B cell (primary cell): ENCODE measurements at regions of chr7 and their contacts with region 1.

Region 1: GRCh38 chr7:90629297-90629918 is 33.3 kb downstream of the CDK14 start:
- DNase-seq: peak; percentile 75
- ATAC-seq: peak; percentile 86
- H3K4me3 ChIP-seq: no peak overlapping the region
- H3K4me3 Mint-ChIP-seq: no peak overlapping the region
- H3K27ac ChIP-seq: no peak overlapping the region
- H3K27ac Mint-ChIP-seq: no peak overlapping the region
- H3K4me1 ChIP-seq: no peaks in the 10 kb centered on the region
- H3K4me1 Mint-ChIP-seq: peaks cover 13% of the 10 kb centered on the region
- H3K27me3 ChIP-seq: no peaks in the 10 kb centered on the region
- H3K27me3 Mint-ChIP-seq: no peaks in the 10 kb centered on the region
- CTCF ChIP-seq: peak; percentile 75

Region 2: GRCh38 chr7:90552521-90552920 is 76.9 kb before region 1 on chr7:
- CTCF ChIA-PET with region 1: interaction called, 122 read pairs
- POLR2A ChIA-PET with region 1: no interaction called
- intact Hi-C with region 1: loop called (anchors 1 kb)
- DNase-seq: peak; percentile 44
- ATAC-seq: no peak
- H3K4me3 ChIP-seq: no peak overlapping the region
- H3K4me3 Mint-ChIP-seq: no peak overlapping the region
- H3K27ac ChIP-seq: no peak overlapping the region
- H3K27ac Mint-ChIP-seq: no peak overlapping the region
- H3K4me1 ChIP-seq: no peaks in the 10 kb centered on the region
- H3K4me1 Mint-ChIP-seq: peaks cover under 1% of the 10 kb centered on the region
- H3K27me3 ChIP-seq: peaks cover 0 to 5% (median 0%) of the 10 kb centered on the region in 4 experiments
- H3K27me3 Mint-ChIP-seq: peaks cover 4% of the 10 kb centered on the region
- CTCF ChIP-seq: peak; percentile 61

Region 3: DNA sequence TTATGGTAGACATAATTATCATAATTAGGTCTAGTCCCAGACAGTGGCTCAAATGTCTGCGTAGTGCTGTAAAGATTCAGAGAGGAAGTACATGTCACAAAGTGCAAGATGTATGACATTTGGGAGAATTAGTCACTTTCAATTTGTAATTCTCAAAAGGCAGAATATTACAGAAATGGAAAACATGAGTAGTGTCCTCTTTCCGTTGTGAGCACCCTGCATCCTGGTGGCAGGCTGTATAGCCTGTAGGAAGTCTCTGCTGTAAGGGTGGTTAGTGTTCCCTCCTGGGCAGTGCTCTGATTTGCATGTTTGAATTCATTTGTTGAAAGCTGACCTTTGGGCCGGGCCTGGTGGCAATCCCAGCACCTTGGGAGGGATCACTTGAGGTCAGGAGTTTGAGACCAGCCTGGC is 16.3 kb before region 1 on chr7:
- CTCF ChIA-PET with region 1: interaction called, 15 read pairs
- POLR2A ChIA-PET with region 1: no interaction called
- intact Hi-C with region 1: loop called (anchors 2 kb)
- DNase-seq: peak; percentile 39
- ATAC-seq: peak; percentile 88
- H3K4me3 ChIP-seq: peak overlapping the region in 3 of 5 experiments; percentile 5 to 13 (median 13)
- H3K4me3 Mint-ChIP-seq: peak overlapping the region; percentile 50
- H3K27ac ChIP-seq: peak overlapping the region in 1 of 2 donors; percentile 66
- H3K27ac Mint-ChIP-seq: peak overlapping the region; percentile 87
- H3K4me1 ChIP-seq: peaks cover 10 to 15% of the 10 kb centered on the region in 2 donors
- H3K4me1 Mint-ChIP-seq: peaks cover 37% of the 10 kb centered on the region
- H3K27me3 ChIP-seq: no peaks in the 10 kb centered on the region
- H3K27me3 Mint-ChIP-seq: no peaks in the 10 kb centered on the region
- CTCF ChIP-seq: no peak

Region 4: DNA sequence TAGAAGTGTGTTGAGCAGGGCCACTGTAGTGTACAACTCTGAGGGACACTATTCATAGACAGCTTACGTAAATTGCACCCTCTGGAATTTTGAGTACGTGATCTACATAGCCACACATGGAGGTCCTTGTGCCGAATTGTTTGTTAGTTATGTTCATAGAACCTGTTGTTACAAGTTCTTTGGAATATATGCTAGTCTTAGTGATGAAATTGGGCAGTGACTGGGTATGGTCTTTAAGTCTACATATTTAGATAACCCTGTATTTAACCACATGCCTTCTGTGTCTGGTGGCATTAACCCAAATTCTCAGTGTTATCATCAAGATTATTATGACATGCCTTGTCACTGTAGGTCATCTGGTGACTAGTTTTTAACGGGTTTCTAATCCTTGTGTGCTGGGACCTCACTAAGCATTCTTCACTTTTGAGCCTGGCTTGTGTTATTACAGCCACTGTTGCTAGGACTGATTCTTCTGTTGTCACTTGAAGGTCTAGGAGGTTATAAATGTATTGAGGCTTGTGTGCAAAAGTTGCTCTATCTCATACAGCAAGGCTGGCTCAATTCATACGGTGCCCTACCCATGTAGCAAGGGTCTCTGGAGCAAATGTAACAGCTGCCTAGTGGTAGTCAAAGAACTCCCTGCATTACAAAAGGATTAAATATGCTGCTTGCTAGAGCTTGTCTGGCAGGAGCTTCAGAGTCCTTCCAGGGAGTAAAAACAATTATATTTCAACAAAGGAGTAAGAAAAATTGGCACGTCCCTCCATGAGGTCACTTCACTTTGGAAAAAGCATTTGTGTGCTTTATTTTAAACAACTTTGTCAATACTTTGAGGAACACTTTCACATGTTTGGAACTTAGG is 32.1 kb after region 1 on chr7:
- CTCF ChIA-PET with region 1: no interaction called
- POLR2A ChIA-PET with region 1: no interaction called
- intact Hi-C with region 1: no loop called
- DNase-seq: no peak
- ATAC-seq: no peak
- H3K4me3 ChIP-seq: no peak overlapping the region
- H3K4me3 Mint-ChIP-seq: no peak overlapping the region
- H3K27ac ChIP-seq: no peak overlapping the region
- H3K27ac Mint-ChIP-seq: no peak overlapping the region
- H3K4me1 ChIP-seq: peaks cover 20 to 25% of the 10 kb centered on the region in 2 donors
- H3K4me1 Mint-ChIP-seq: peaks cover 35% of the 10 kb centered on the region
- H3K27me3 ChIP-seq: no peaks in the 10 kb centered on the region
- H3K27me3 Mint-ChIP-seq: no peaks in the 10 kb centered on the region
- CTCF ChIP-seq: no peak